HCT116 (cell line): ENCODE measurements at regions of chr10 and their contacts with region 1.

Region 1: GRCh38 chr10:60208676-60209269 is 180.9 kb downstream of the ANK3 start:
- DNase-seq: peak; percentile 23
- ATAC-seq: peak; percentile 60; the same call in 1 of the 2 replicates
- H3K4me3 ChIP-seq: no peak overlapping the region
- H3K27ac ChIP-seq: no peak overlapping the region
- H3K4me1 ChIP-seq: no peaks in the 10 kb centered on the region
- H3K27me3 ChIP-seq: no peaks in the 10 kb centered on the region
- CTCF ChIP-seq: peak; percentile 76 to 86 (median 85)
- POLR2A ChIP-seq: no peak
- RAD21 ChIP-seq: peak; percentile 89

Region 2: GRCh38 chr10:59865101-59865500 is 343.7 kb before region 1 on chr10:
- CTCF ChIA-PET with region 1: no interaction called
- POLR2A ChIA-PET with region 1: no interaction called
- RAD21 ChIA-PET with region 1: no interaction called
- intact Hi-C with region 1: no loop called
- DNase-seq: peak; percentile 40
- ATAC-seq: peak; percentile 91
- H3K4me3 ChIP-seq: no peak overlapping the region
- H3K27ac ChIP-seq: no peak overlapping the region
- H3K4me1 ChIP-seq: peaks cover 5 to 16% of the 10 kb centered on the region in 2 experiments; a peak in 2 of 4 replicates
- H3K27me3 ChIP-seq: no peaks in the 10 kb centered on the region
- CTCF ChIP-seq: peak; percentile 38 to 50 (median 39); a peak in 4 of 6 replicates
- POLR2A ChIP-seq: no peak
- RAD21 ChIP-seq: peak; percentile 73

Region 3: GRCh38 chr10:60099998-60100747 is 108.6 kb before region 1 on chr10:
- CTCF ChIA-PET with region 1: interaction called, 35 read pairs
- POLR2A ChIA-PET with region 1: no interaction called
- RAD21 ChIA-PET with region 1: interaction called in 1 of 2 experiments, 3 read pairs
- intact Hi-C with region 1: loop called (anchors 1 kb)
- DNase-seq: peak; percentile 39
- ATAC-seq: peak; percentile 71
- H3K4me3 ChIP-seq: no peak overlapping the region
- H3K27ac ChIP-seq: no peak overlapping the region
- H3K4me1 ChIP-seq: peaks cover 0 to 4% of the 10 kb centered on the region in 2 experiments; a peak in 1 of 4 replicates
- H3K27me3 ChIP-seq: no peaks in the 10 kb centered on the region
- CTCF ChIP-seq: peak; percentile 48 to 66 (median 65); a peak in 5 of 6 replicates
- POLR2A ChIP-seq: no peak
- RAD21 ChIP-seq: peak; percentile 76

Region 4: GRCh38 chr10:60114765-60115586 is 93.8 kb before region 1 on chr10:
- CTCF ChIA-PET with region 1: interaction called, 13 read pairs
- POLR2A ChIA-PET with region 1: no interaction called
- RAD21 ChIA-PET with region 1: no interaction called
- intact Hi-C with region 1: loop called (anchors 1 kb)
- DNase-seq: peak; percentile 29
- ATAC-seq: peak; percentile 66
- H3K4me3 ChIP-seq: no peak overlapping the region
- H3K27ac ChIP-seq: no peak overlapping the region
- H3K4me1 ChIP-seq: no peaks in the 10 kb centered on the region
- H3K27me3 ChIP-seq: no peaks in the 10 kb centered on the region
- CTCF ChIP-seq: peak; percentile 61 to 73 (median 64)
- POLR2A ChIP-seq: no peak
- RAD21 ChIP-seq: peak; percentile 75

Region 5: DNA sequence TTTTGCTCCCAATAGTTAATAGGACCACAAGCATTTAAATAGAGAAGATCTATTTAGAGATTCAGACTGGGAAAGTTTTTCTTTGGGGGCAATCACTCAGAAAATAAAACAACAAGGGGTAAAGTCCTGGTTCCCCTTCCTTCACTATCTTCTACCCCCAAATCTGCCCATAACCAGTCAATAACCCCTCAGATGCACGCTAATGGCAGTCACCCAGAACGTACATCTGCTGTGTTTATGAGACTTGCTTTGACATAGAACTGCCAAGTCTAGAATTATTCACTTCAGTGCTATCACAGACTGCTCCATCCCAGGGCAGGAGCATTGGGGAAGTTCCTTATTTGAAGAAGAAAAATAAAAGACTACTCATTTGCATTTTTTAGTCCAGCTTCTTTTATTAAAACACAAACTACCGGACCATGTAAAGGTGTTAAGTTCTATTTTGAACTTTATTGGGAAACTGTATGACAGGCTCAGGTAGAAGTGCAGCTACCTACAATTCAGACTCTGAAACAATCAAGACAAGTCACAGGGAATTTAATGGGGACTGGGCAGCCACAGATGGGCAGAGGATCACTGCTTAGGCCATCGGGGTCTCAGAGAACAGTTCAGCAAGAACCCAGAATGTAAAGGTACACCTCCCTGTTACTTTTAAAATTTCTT is 142.5 kb after region 1 on chr10:
- CTCF ChIA-PET with region 1: no interaction called
- POLR2A ChIA-PET with region 1: no interaction called
- RAD21 ChIA-PET with region 1: no interaction called
- intact Hi-C with region 1: no loop called
- DNase-seq: no peak
- ATAC-seq: no peak
- H3K4me3 ChIP-seq: no peak overlapping the region
- H3K27ac ChIP-seq: no peak overlapping the region
- H3K4me1 ChIP-seq: no peaks in the 10 kb centered on the region
- H3K27me3 ChIP-seq: no peaks in the 10 kb centered on the region
- CTCF ChIP-seq: no peak
- POLR2A ChIP-seq: no peak
- RAD21 ChIP-seq: no peak